T-cell (primary cell): ENCODE measurements at regions of chr7 and their contacts with region 1.

Region 1: GRCh38 chr7:76314042-76314721 is 11.7 kb downstream of the HSPB1 start:
- DNase-seq: peak; percentile 86 to 98 (median 94)
- ATAC-seq: peak; percentile 53 to 70 (median 59)
- H3K4me3 ChIP-seq: no peak overlapping the region
- H3K4me3 Mint-ChIP-seq: peak overlapping the region in 1 of 3 donors; percentile 34
- H3K27ac ChIP-seq: no peak overlapping the region
- H3K27ac Mint-ChIP-seq: peak overlapping the region; percentile 61 to 82
- H3K4me1 ChIP-seq: peaks cover 6 to 27% of the 10 kb centered on the region in 2 experiments
- H3K4me1 Mint-ChIP-seq: peaks cover 20 to 25% (median 21%) of the 10 kb centered on the region in 3 donors
- H3K27me3 ChIP-seq: no peaks in the 10 kb centered on the region
- H3K27me3 Mint-ChIP-seq: no peaks in the 10 kb centered on the region

Region 2: DNA sequence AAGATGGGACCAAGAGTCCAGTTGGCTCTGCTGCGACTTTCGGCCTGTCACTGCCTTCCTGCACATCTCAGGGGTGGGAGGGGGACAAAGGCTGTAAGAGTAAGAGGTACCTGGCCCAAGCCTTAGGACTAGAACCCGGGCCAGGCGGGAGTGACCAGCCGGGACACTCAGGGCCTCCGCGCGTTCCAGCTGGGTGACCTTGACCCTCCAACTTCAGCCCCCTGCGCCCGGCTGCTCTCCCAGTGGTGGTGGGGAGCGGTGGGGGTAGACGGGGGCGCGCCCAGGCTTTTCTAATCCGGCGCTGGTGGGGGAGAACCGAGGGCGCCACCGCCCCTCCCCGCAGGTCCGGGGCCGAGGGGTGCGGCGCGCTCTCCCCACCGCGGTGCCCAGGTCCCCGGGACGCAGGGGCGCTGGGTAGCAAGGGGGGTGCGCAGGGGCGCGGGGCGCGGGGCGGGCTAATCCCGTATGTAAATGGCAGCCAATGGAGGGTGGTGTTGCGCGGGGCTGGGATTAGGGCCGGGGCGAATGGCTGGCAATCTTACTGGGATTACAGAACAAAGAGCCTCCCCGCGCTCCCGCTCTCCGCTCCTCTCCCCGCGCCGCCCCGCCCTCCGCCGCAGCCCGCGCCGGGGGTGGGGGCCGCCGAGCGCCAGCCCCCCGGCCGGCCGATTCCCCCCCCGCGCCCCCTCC is 1860.7 kb before region 1 on chr7 and contains the start of gene GTF2IRD1:
- CTCF ChIA-PET with region 1: no interaction called
- POLR2A ChIA-PET with region 1: no interaction called
- DNase-seq: peak in 34 of 35 experiments; percentile 9 to 60 (median 35)
- ATAC-seq: peak; percentile 23 to 45 (median 32)
- H3K4me3 ChIP-seq: peak within 1 kb of the TSS; percentile 51 to 58
- H3K4me3 Mint-ChIP-seq: peak within 1 kb of the TSS; percentile 76 to 88 (median 79)
- H3K27ac ChIP-seq: peak within 1 kb of the TSS; percentile 83
- H3K27ac Mint-ChIP-seq: peak within 1 kb of the TSS; percentile 94
- H3K4me1 ChIP-seq: peaks cover 7 to 23% of the 10 kb centered on the region in 2 experiments
- H3K4me1 Mint-ChIP-seq: peaks cover 13 to 26% (median 22%) of the 10 kb centered on the region in 3 donors
- H3K27me3 ChIP-seq: peaks cover 0 to 21% of the 10 kb centered on the region in 2 experiments
- H3K27me3 Mint-ChIP-seq: no peaks in the 10 kb centered on the region
- total RNA-seq, gene GTF2IRD1: 1.2 to 6.9 (median 3.3) TPM

Region 3: DNA sequence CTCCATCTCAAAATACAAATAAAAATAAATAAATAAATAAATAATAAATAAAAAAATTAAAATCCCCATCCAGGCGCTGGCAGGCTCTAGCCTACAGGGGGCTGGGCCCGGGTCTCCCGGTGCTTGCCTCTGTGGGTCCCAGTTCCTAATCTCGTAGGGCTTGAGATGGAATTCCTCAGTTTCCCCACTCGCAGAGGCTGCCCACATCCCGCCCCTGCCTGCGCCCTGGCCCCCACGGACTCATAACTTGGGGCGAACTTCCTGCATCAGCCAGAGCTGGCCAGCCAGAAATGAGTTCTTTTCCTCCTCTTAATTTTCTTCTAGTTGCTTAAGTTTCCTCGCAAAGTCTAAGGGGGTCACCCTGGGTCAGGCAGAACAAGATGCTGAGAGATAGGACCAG is 134.5 kb before region 1 on chr7:
- CTCF ChIA-PET with region 1: interaction called, 10 read pairs
- POLR2A ChIA-PET with region 1: no interaction called
- DNase-seq: no peak
- ATAC-seq: no peak
- H3K4me3 ChIP-seq: no peak overlapping the region
- H3K4me3 Mint-ChIP-seq: no peak overlapping the region
- H3K27ac ChIP-seq: no peak overlapping the region
- H3K27ac Mint-ChIP-seq: no peak overlapping the region
- H3K4me1 ChIP-seq: peaks cover 0 to 12% of the 10 kb centered on the region in 2 experiments
- H3K4me1 Mint-ChIP-seq: peaks cover 3 to 6% (median 5%) of the 10 kb centered on the region in 3 donors
- H3K27me3 ChIP-seq: peaks cover 0 to 11% of the 10 kb centered on the region in 2 experiments
- H3K27me3 Mint-ChIP-seq: peaks cover 0 to 4% of the 10 kb centered on the region in 2 donors

Region 4: DNA sequence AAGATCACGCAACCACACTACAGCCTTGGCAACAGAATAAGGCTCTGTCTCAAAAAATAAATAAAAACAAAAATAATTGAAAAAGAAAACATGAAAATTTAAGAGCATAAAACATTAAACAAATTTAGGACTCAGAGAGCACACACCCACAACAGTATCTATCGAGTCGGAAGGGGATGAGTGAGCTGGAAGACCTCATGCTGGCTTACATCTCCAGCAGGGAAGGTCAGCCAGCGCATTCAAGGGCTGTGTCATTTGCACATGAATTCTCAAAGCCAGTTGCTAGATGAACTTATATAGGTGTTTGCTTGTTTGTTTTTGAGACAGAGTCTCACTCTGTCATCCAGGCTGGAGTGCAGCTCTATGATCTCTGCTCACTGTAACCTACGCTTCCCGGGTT is 62.2 kb before region 1 on chr7:
- CTCF ChIA-PET with region 1: no interaction called
- POLR2A ChIA-PET with region 1: no interaction called
- DNase-seq: no peak
- ATAC-seq: no peak
- H3K4me3 ChIP-seq: no peak overlapping the region
- H3K4me3 Mint-ChIP-seq: no peak overlapping the region
- H3K27ac ChIP-seq: no peak overlapping the region
- H3K27ac Mint-ChIP-seq: no peak overlapping the region
- H3K4me1 ChIP-seq: no peaks in the 10 kb centered on the region
- H3K4me1 Mint-ChIP-seq: no peaks in the 10 kb centered on the region
- H3K27me3 ChIP-seq: peaks cover 0 to 11% of the 10 kb centered on the region in 2 experiments
- H3K27me3 Mint-ChIP-seq: peaks cover 9% of the 10 kb centered on the region in 2 donors

Region 5: GRCh38 chr7:76291343-76292212 is 22.6 kb before region 1 on chr7:
- CTCF ChIA-PET with region 1: interaction called, 7 to 14 read pairs
- POLR2A ChIA-PET with region 1: interaction called in 1 of 2 experiments, 3 read pairs
- DNase-seq: peak; percentile 42 to 91 (median 71)
- ATAC-seq: peak; percentile 90 to 95 (median 92)
- H3K4me3 ChIP-seq: no peak overlapping the region
- H3K4me3 Mint-ChIP-seq: no peak overlapping the region
- H3K27ac ChIP-seq: no peak overlapping the region
- H3K27ac Mint-ChIP-seq: peak overlapping the region; percentile 46 to 58
- H3K4me1 ChIP-seq: peaks cover 0 to 11% of the 10 kb centered on the region in 2 experiments
- H3K4me1 Mint-ChIP-seq: peaks cover 5 to 9% (median 6%) of the 10 kb centered on the region in 3 donors
- H3K27me3 ChIP-seq: peaks cover 0 to 14% of the 10 kb centered on the region in 2 experiments
- H3K27me3 Mint-ChIP-seq: no peaks in the 10 kb centered on the region

Region 6: DNA sequence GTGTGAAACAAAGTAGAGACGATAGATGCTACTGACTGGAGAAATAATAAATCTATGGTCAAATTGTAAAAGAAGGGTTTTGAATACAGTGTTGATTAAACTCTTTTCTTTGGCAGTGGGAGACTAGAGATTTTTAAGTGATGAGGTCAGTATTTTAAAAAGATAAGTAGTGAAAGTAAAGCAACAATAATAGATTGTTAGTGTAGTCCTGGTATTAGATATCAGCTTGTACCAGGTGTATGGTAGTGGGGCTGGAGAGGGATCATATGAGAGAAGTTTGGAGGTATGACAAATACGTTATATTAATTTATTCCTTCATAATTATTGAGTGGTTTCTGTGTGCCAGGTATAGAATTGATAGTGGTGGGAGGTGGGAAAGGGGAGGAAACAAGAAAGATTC is 1509.6 kb after region 1 on chr7:
- CTCF ChIA-PET with region 1: no interaction called
- POLR2A ChIA-PET with region 1: no interaction called
- DNase-seq: no peak
- ATAC-seq: no peak
- H3K4me3 ChIP-seq: no peak overlapping the region
- H3K4me3 Mint-ChIP-seq: peak overlapping the region in 1 of 3 donors; percentile 16
- H3K27ac ChIP-seq: no peak overlapping the region
- H3K27ac Mint-ChIP-seq: peak overlapping the region in 1 of 2 donors; percentile 47
- H3K4me1 ChIP-seq: peaks cover 0 to 14% of the 10 kb centered on the region in 2 experiments
- H3K4me1 Mint-ChIP-seq: peaks cover 34 to 47% (median 44%) of the 10 kb centered on the region in 3 donors
- H3K27me3 ChIP-seq: peaks cover 0 to 3% of the 10 kb centered on the region in 2 experiments
- H3K27me3 Mint-ChIP-seq: no peaks in the 10 kb centered on the region